Activated B cell treated with CpG ODN at 0.5 μM for 24 hours (primary cell): ENCODE measurements at regions of chr17 and their contacts with region 1.

Region 1: DNA sequence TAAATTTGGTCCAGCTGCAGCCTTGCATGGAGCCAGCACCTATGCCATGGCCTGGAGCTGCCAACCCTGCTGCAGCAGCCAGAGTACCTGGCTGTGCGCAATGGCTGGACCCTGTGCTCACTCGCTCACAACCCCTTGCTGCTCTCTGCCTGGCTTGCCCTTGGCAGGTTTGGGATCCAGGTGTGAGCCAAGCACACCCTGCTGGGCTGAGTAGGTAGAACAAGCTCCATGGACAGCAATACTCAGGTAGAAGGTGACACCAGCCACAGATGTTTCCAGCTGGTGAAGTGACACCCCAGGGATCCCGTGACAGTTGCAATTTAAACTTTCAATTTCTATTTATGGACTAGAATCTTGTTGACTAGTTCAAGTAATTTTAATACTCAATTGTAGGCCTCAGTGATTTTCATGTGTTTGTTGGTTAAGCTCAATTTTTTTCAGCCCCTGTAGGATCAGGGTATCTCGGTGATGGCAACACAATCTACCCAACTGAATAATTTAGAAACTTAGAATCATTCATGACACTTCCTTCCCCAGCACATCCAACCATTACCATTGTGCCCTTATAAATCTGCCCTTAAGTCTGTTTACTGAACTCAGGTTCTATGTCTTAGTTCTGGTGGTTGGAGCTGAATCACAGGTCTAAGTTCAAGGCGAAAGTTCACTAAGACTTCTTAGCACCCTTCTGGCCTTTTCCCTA is 480.0 kb downstream of the PMP22 start:
- DNase-seq: no peak
- ATAC-seq: peak; percentile 50
- H3K4me3 Mint-ChIP-seq: no peak overlapping the region
- H3K27ac Mint-ChIP-seq: no peak overlapping the region
- H3K4me1 Mint-ChIP-seq: peaks cover 4% of the 10 kb centered on the region
- H3K27me3 Mint-ChIP-seq: peaks cover 15% of the 10 kb centered on the region
- CTCF ChIP-seq: no peak

Region 2: DNA sequence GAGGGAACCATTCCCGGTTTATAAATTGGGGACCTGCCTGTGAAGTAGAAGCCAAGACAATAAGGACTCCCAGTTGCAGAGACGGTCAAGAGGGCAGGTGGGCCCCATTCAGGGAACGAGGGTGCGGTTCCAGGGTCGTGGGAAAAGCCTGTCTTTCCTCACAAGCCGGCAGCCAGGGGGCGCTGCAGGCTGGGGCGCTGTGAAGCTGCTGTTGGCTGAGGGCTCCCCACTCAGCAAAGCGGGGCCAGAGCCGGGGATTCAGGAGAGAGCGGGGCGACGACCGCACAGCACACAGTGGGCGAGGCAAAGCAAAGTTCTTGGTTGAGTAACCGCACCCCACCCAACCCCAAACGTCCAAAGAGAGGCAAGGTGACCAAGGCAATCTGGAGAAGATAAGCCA is 573.3 kb before region 1 on chr17:
- CTCF ChIA-PET with region 1: no interaction called
- POLR2A ChIA-PET with region 1: no interaction called
- intact Hi-C with region 1: loop called (anchors 10 kb)
- DNase-seq: peak; percentile 21
- ATAC-seq: no peak
- H3K4me3 Mint-ChIP-seq: no peak overlapping the region
- H3K27ac Mint-ChIP-seq: no peak overlapping the region
- H3K4me1 Mint-ChIP-seq: no peaks in the 10 kb centered on the region
- H3K27me3 Mint-ChIP-seq: no peaks in the 10 kb centered on the region
- CTCF ChIP-seq: no peak

Region 3: GRCh38 chr17:14805348-14805747 is 20.2 kb after region 1 on chr17:
- CTCF ChIA-PET with region 1: no interaction called
- POLR2A ChIA-PET with region 1: no interaction called
- intact Hi-C with region 1: no loop called
- DNase-seq: no peak
- ATAC-seq: no peak
- H3K4me3 Mint-ChIP-seq: no peak overlapping the region
- H3K27ac Mint-ChIP-seq: no peak overlapping the region
- H3K4me1 Mint-ChIP-seq: no peaks in the 10 kb centered on the region
- H3K27me3 Mint-ChIP-seq: peaks cover 5% of the 10 kb centered on the region
- CTCF ChIP-seq: no peak

Region 4: GRCh38 chr17:14833201-14833785 is 48.1 kb after region 1 on chr17:
- CTCF ChIA-PET with region 1: no interaction called
- POLR2A ChIA-PET with region 1: no interaction called
- intact Hi-C with region 1: no loop called
- DNase-seq: no peak
- ATAC-seq: no peak
- H3K4me3 Mint-ChIP-seq: no peak overlapping the region
- H3K27ac Mint-ChIP-seq: no peak overlapping the region
- H3K4me1 Mint-ChIP-seq: no peaks in the 10 kb centered on the region
- H3K27me3 Mint-ChIP-seq: no peaks in the 10 kb centered on the region
- CTCF ChIP-seq: no peak